A549 (cell line): ENCODE measurements at regions of chr19 and their contacts with region 1.

Region 1: DNA sequence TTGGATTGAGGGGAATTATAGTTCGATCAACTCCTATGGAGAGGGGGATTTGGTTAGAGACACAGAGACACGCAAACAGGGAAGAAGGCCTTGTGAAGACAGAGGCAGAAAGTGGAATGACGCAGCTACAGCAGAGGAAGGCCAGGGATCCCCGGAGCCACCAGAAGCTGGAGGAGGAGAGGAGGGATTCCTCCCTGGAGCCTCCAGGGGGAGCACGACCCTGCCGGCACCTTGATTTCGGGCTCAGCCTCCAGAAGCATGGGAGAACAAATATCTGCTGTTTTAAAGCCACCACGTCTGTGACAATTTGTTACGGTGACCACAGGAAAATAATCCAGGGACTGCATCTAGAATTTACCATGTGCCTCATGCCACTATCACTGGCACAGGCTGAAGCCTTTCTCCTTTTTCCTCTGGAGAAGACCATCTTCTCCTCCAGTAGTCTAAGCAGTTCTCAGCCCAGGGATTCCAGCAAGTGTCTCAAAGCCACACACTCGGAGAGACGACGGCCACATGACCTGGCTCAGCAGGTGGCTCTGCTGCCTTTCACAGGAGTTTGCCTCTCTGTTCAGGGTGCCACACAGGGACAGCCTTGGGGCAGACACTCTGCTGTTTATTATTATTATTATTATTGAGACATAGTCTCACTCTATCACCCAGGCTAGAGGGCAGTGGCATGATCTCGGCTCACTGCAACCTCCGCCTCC is 39.9 kb upstream of the CCNE1 start:
- DNase-seq: peak; percentile 78 to 97
- ATAC-seq: peak; percentile 95 to 96
- H3K4me3 ChIP-seq: no peak overlapping the region
- H3K27ac ChIP-seq: 0 out of 6 replicates have a peak overlapping the region, but pooled peaks of 1 of the 2 experiments have one; percentile 24
- H3K4me1 ChIP-seq: peaks cover 3% of the 10 kb centered on the region; the same call in 1 of the 3 replicates
- CTCF ChIP-seq: peak; percentile 89
- EP300 ChIP-seq: no peak
- POLR2A ChIP-seq: no peak
- RAD21 ChIP-seq: peak; percentile 72 to 77

Region 2: GRCh38 chr19:29735800-29736199 is 36.1 kb before region 1 on chr19:
- CTCF ChIA-PET with region 1: interaction called, 38 read pairs
- POLR2A ChIA-PET with region 1: no interaction called
- DNase-seq: peak in 1 of 2 experiments; percentile 31
- ATAC-seq: peak in 1 of 2 experiments; percentile 12; a peak in 2 of 6 replicates
- H3K4me3 ChIP-seq: no peak overlapping the region
- H3K27ac ChIP-seq: no peak overlapping the region
- H3K4me1 ChIP-seq: 0 out of 3 replicates have a peak, but pooled peaks cover 3% of the 10 kb centered on the region
- CTCF ChIP-seq: no peak
- EP300 ChIP-seq: no peak
- POLR2A ChIP-seq: no peak
- RAD21 ChIP-seq: no peak

Region 3: DNA sequence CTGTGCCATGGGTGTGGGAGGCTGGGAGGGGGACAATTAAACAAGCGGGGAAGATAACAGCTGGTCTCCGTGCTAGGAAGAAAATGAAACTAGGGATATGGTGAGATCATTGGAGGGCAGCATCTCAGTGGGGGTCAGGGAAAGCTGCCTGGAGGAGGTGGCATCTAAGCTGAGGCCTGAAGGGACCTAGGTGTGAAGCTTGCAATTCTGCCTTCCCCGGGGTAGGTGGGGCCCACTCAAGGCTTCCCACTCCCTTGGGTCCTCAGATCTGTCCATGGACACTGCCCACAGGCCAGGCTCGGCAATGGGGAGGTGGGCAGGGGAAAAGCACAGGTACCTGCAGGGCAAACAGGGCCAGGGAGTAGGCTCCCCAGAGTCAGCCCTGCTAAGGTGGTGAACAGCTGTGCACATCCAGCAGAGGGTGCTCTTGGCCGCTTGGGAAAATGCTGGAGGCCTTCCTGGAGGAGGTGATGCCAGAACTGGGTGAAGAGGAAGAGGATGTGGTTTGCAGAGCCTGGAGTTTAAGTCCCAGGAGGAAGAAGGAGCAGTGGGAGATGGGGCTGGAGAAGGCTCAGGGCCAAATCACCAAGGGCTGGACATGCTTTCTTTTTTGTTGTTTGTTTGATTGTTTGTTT is 14.2 kb after region 1 on chr19:
- CTCF ChIA-PET with region 1: interaction called, 69 read pairs
- POLR2A ChIA-PET with region 1: interaction called, 3 read pairs
- DNase-seq: peak in 1 of 2 experiments; percentile 53
- ATAC-seq: peak; percentile 50 to 79; a peak in 4 of 6 replicates
- H3K4me3 ChIP-seq: no peak overlapping the region
- H3K27ac ChIP-seq: no peak overlapping the region
- H3K4me1 ChIP-seq: no peaks in the 10 kb centered on the region
- CTCF ChIP-seq: peak; percentile 56
- EP300 ChIP-seq: no peak
- POLR2A ChIP-seq: no peak
- RAD21 ChIP-seq: peak; percentile 38 to 46; a peak in 3 of 5 replicates

Region 4: GRCh38 chr19:29831041-29831548 is 59.2 kb after region 1 on chr19:
- CTCF ChIA-PET with region 1: interaction called, 10 read pairs
- POLR2A ChIA-PET with region 1: no interaction called
- DNase-seq: peak in 1 of 2 experiments; percentile 71
- ATAC-seq: peak; percentile 70
- H3K4me3 ChIP-seq: no peak overlapping the region
- H3K27ac ChIP-seq: 0 out of 6 replicates have a peak overlapping the region, but pooled peaks of 1 of the 2 experiments have one; percentile 2
- H3K4me1 ChIP-seq: peaks cover 12% of the 10 kb centered on the region; the same call in 2 of the 3 replicates
- CTCF ChIP-seq: no peak
- EP300 ChIP-seq: no peak
- POLR2A ChIP-seq: no peak
- RAD21 ChIP-seq: no peak

Region 5: GRCh38 chr19:29858000-29858596 is 86.2 kb after region 1 on chr19:
- CTCF ChIA-PET with region 1: interaction called, 53 read pairs
- POLR2A ChIA-PET with region 1: no interaction called
- DNase-seq: peak; percentile 60 to 63
- ATAC-seq: peak; percentile 78 to 86
- H3K4me3 ChIP-seq: no peak overlapping the region
- H3K27ac ChIP-seq: no peak overlapping the region
- H3K4me1 ChIP-seq: no peaks in the 10 kb centered on the region
- CTCF ChIP-seq: peak; percentile 68
- EP300 ChIP-seq: no peak
- POLR2A ChIP-seq: no peak
- RAD21 ChIP-seq: peak; percentile 63